ENCODE measurements at regions of chr12 and their contacts with region 1.

Region 1: GRCh38 chr12:6323340-6323994 is 13.0 kb downstream of the PLEKHG6 start:
- DNase-seq: peak in 7 of 10 donors; percentile 26 to 61 (median 41)
- ATAC-seq: peak; percentile 82
- H3K4me3 Mint-ChIP-seq: peak overlapping the region; percentile 75 to 96 (median 84)
- H3K27ac Mint-ChIP-seq: peak overlapping the region; percentile 89 to 96 (median 92)
- H3K4me1 Mint-ChIP-seq: peaks cover 45 to 79% (median 69%) of the 10 kb centered on the region in 4 donors
- H3K27me3 Mint-ChIP-seq: peaks cover 0 to 10% (median 0%) of the 10 kb centered on the region in 5 donors

Region 2: DNA sequence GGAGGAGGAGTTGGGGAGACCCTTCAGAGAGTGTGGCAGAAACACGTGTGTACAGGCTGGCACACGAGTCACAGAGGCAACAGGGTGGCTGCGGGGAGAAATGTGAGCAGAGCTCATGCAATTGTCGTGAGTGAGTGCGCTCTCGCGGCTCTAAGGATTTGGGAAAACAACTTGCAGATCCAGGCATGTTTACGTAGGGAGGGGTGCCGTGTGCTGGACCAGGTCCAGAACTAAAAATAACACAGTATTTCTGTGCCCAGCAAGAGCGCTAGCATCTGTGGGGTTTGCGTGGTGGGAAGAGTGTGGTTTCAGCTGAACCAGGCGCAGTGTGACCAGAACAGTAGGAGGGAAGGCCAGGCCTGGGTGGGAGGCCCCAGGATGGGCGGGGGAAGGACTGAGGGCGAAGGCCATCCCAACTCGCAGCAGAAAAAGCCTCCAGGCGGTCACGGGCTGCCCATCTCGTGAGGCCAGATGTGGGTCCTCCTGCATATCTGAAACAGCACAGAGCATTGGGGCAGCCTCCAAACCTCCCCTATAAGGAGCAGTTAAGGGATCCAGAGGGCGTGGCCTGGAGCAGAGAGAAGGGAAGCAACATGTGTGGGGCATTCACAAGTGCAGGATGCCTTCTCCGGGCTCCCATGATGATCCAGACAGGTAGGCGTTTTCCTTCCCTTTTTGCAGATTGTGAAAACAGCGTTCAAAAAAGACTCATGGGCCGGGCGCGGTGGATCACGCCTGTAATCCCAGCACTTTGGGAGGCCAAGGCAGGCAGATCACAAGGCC is 141.2 kb before region 1 on chr12:
- POLR2A ChIA-PET with region 1: no interaction called
- DNase-seq: no peak
- ATAC-seq: no peak
- H3K4me3 Mint-ChIP-seq: no peak overlapping the region
- H3K27ac Mint-ChIP-seq: peak overlapping the region in 1 of 10 donors; percentile 6
- H3K4me1 Mint-ChIP-seq: peaks cover 0 to 7% (median 2%) of the 10 kb centered on the region in 4 donors
- H3K27me3 Mint-ChIP-seq: peaks cover 0 to 7% (median 0%) of the 10 kb centered on the region in 5 donors

Region 3: GRCh38 chr12:6233121-6233971 is 90.1 kb before region 1 on chr12:
- POLR2A ChIA-PET with region 1: no interaction called
- DNase-seq: peak in 4 of 10 donors; percentile 20 to 64 (median 27)
- ATAC-seq: no peak
- H3K4me3 Mint-ChIP-seq: peak overlapping the region in 3 of 10 donors; percentile 18 to 59 (median 28)
- H3K27ac Mint-ChIP-seq: peak overlapping the region in 7 of 10 donors; percentile 19 to 82 (median 67)
- H3K4me1 Mint-ChIP-seq: peaks cover 22 to 49% (median 40%) of the 10 kb centered on the region in 4 donors
- H3K27me3 Mint-ChIP-seq: peaks cover 0 to 2% (median 0%) of the 10 kb centered on the region in 5 donors

Region 4: GRCh38 chr12:6250343-6250742 is 73.1 kb before region 1 on chr12:
- POLR2A ChIA-PET with region 1: no interaction called
- DNase-seq: no peak
- ATAC-seq: no peak
- H3K4me3 Mint-ChIP-seq: no peak overlapping the region
- H3K27ac Mint-ChIP-seq: no peak overlapping the region
- H3K4me1 Mint-ChIP-seq: no peaks in the 10 kb centered on the region
- H3K27me3 Mint-ChIP-seq: peaks cover 0 to 5% (median 2%) of the 10 kb centered on the region in 5 donors

Region 5: GRCh38 chr12:6278439-6279255 is 44.8 kb before region 1 on chr12:
- POLR2A ChIA-PET with region 1: no interaction called
- DNase-seq: peak; percentile 69 to 90 (median 85)
- ATAC-seq: peak; percentile 97 to 98
- H3K4me3 Mint-ChIP-seq: peak overlapping the region; percentile 64 to 76 (median 70)
- H3K27ac Mint-ChIP-seq: no peak overlapping the region
- H3K4me1 Mint-ChIP-seq: peaks cover 0 to 5% (median 2%) of the 10 kb centered on the region in 4 donors
- H3K27me3 Mint-ChIP-seq: peaks cover 10 to 33% (median 29%) of the 10 kb centered on the region in 5 donors

Region 6: GRCh38 chr12:6367065-6367968 is 43.9 kb after region 1 on chr12:
- POLR2A ChIA-PET with region 1: interaction called, 358 read pairs
- DNase-seq: peak in 9 of 10 donors; percentile 20 to 78 (median 39)
- ATAC-seq: peak; percentile 70 to 74
- H3K4me3 Mint-ChIP-seq: peak overlapping the region in 4 of 10 donors; percentile 15 to 36 (median 35)
- H3K27ac Mint-ChIP-seq: peak overlapping the region; percentile 34 to 88 (median 78)
- H3K4me1 Mint-ChIP-seq: peaks cover 16 to 44% (median 40%) of the 10 kb centered on the region in 4 donors
- H3K27me3 Mint-ChIP-seq: no peaks in the 10 kb centered on the region

Measured in naive thymus-derived CD8-positive, alpha-beta T cell (primary cell).